ENCODE measurements at regions of chr2 and their contacts with region 1.

Region 1: GRCh38 chr2:26785431-26786206 is at the start of gene CENPA:
- DNase-seq: peak; percentile 99
- H3K4me3 ChIP-seq: peak within 1 kb of the TSS; percentile 37 to 80 (median 68)
- H3K27ac ChIP-seq: peak within 1 kb of the TSS in 3 of 4 donors; percentile 56 to 66 (median 61)
- H3K4me1 ChIP-seq: peaks cover 0 to 15% (median 11%) of the 10 kb centered on the region in 4 donors
- H3K27me3 ChIP-seq: peaks cover 0 to 28% (median 11%) of the 10 kb centered on the region in 3 donors
- CTCF ChIP-seq: peak in 2 of 4 experiments; percentile 16 to 18
- EP300 ChIP-seq: no peak
- POLR2A ChIP-seq: no peak
- total RNA-seq, gene CENPA: not detected

Region 2: DNA sequence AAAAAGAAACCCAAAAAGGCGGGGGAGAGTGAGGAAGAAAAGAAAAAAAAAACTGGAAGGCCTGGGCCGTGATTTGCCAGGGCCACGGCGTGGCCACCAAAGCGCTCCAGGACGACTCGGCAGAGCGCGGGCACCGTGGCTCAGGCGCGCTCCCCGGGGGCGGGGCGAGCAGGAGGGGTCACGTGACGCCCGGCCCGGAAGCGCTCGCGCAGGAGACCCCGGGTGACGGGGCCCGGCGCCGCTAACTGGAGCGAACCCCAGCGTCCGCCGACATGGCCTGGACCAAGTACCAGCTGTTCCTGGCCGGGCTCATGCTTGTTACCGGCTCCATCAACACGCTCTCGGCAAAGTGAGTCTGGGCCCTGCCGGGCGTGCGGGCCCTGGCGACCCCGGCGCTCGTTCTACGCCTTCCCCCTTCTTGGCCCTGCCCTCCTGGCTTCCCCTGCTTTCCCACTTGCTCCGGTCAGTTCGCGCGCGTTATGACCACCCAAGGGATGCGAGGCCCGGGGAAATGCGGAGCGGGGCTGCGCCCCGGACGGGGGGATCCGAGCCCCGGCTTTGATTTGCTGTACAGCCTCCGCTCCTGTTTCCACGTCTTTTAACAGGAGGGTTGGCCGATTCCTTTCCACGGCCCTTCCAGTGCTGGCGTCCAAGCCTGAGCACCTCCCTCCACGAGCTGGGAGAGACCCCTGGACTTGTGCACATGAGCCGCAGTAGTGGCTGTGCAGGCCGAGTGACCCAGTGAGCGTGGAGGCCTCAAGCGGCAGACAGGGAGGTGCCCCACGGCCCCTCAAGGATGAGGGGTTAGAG is 21.3 kb before region 1 on chr2 and contains the start of gene SLC35F6:
- intact Hi-C with region 1: loop called (anchors 2 kb)
- DNase-seq: peak; percentile 92
- H3K4me3 ChIP-seq: peak within 1 kb of the TSS; percentile 62 to 89 (median 76)
- H3K27ac ChIP-seq: peak within 1 kb of the TSS; percentile 85 to 96 (median 90)
- H3K4me1 ChIP-seq: peaks cover 0 to 55% (median 32%) of the 10 kb centered on the region in 4 donors
- H3K27me3 ChIP-seq: no peaks in the 10 kb centered on the region
- CTCF ChIP-seq: no peak
- EP300 ChIP-seq: no peak
- POLR2A ChIP-seq: peak; percentile 75 to 83
- total RNA-seq, gene SLC35F6: 19.6 to 27.4 (median 25.8) TPM

Region 3: GRCh38 chr2:26807788-26808460 is 22.3 kb after region 1 on chr2:
- intact Hi-C with region 1: no loop called
- DNase-seq: no peak
- H3K4me3 ChIP-seq: no peak overlapping the region
- H3K27ac ChIP-seq: no peak overlapping the region
- H3K4me1 ChIP-seq: no peaks in the 10 kb centered on the region
- H3K27me3 ChIP-seq: peaks cover 0 to 12% (median 0%) of the 10 kb centered on the region in 3 donors
- CTCF ChIP-seq: no peak
- EP300 ChIP-seq: no peak
- POLR2A ChIP-seq: no peak

Region 4: GRCh38 chr2:26848336-26849055 is 62.9 kb after region 1 on chr2:
- intact Hi-C with region 1: no loop called
- DNase-seq: no peak
- H3K4me3 ChIP-seq: peak overlapping the region in 3 of 4 donors; percentile 26 to 42 (median 38)
- H3K27ac ChIP-seq: no peak overlapping the region
- H3K4me1 ChIP-seq: peaks cover 0 to 39% (median 37%) of the 10 kb centered on the region in 4 donors
- H3K27me3 ChIP-seq: peaks cover 35 to 94% (median 79%) of the 10 kb centered on the region in 3 donors
- CTCF ChIP-seq: no peak
- EP300 ChIP-seq: no peak
- POLR2A ChIP-seq: no peak